Cardiac septum (tissue), 1 donor: ENCODE measurements at regions of chr5 and their contacts with region 1.

Region 1: DNA sequence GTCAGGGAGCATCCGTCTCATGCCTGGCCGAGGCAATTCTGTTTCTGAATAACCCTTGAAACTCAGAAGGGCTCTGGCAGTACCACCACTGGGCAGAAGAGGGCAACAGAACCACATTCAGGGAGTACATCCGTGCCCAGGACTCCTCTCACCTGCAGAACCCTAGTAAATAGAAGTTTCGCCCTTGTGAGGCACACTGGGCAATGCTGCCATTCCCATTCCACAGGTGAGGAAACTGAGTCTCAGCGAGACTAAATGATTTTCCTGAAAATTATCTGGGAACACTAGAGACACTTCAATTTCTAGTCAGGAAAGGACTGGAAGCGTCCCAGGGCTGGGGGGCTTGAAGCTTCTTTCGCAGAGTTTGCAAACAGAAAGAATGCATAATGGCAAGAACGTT is 74.7 kb downstream of the FGF1 start:
- DNase-seq: no peak

Region 2: DNA sequence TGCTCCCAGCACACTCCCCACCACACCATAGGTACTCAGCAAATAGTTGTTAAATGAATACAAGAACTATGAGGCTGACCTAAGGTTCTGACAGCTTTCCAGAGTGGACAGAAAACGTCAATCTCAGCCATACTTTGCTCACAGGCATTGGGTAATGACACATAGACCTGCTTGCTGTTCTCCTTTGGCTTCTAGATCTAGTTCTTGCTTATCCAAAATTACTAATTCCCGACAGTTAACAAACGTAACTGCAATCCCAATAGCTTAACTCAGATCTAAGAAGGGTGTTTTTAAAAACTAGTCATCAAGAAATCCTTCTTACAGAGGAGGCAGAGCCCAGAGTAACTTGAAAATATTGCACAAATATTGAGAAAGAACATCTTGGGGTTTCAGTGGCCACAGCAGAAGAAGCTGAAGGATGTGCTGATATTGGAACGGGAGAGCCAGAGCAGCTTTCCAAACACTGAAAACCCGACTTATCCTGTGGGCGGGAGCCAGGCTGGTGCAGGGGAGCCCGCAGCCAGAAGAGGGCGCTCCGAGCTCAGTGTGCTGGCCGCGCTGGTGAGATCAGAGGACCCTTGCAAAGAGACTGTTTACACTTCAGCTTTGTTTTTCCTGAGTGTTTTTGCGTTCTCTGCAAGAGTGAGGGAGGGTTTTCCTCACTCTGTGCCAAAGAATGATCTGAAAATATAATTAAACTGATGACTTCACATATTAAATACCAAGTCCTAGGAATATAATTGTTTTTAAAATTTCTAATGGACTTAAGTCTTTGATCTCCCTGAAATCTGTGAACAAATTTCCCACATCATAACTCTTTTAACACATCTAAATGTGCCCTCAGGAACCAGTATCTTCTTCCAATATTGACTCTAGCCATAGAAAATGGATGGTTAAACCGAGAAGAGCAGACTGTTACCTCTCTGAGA is 44.4 kb after region 1 on chr5:
- intact Hi-C with region 1: loop called (anchors 2 kb)
- DNase-seq: peak; percentile 91

Region 3: DNA sequence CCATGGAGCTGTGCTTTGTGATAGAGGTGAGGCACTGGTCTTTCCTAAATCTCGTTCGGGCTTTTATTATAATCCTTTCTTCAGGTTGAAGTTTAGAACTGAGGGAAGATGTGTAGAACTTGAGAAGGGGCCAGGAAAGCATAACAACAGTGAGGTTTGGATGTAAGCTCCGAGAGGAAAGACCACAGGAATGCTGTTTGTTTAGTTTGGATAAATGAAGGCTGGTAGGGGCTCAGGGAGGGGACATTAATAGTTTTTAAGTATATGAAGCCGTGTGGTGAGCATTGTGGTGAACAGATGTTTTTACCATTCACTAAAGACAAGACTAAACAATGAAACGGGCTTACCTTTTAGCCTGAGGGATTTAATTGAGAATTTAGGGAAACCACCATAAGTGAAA is 289.8 kb after region 1 on chr5:
- intact Hi-C with region 1: no loop called
- DNase-seq: no peak